ENCODE measurements at regions of chr22 and their contacts with region 1.

Region 1: GRCh38 chr22:18024276-18024947 is at the start of gene MICAL3:
- DNase-seq: peak in 1 of 2 donors; percentile 66
- ATAC-seq: peak; percentile 74 to 92 (median 88)
- H3K4me3 ChIP-seq: peak within 1 kb of the TSS; percentile 49 to 85 (median 80)
- H3K27ac ChIP-seq: peak within 1 kb of the TSS; percentile 35 to 95 (median 78)
- H3K4me1 ChIP-seq: peaks cover 0 to 36% (median 17%) of the 10 kb centered on the region in 9 donors
- H3K27me3 ChIP-seq: peaks cover 0 to 59% (median 0%) of the 10 kb centered on the region in 7 donors
- CTCF ChIP-seq: peak; percentile 39 to 83 (median 72)
- total RNA-seq, gene MICAL3: 74.7 to 137 (median 112) TPM

Region 2: DNA sequence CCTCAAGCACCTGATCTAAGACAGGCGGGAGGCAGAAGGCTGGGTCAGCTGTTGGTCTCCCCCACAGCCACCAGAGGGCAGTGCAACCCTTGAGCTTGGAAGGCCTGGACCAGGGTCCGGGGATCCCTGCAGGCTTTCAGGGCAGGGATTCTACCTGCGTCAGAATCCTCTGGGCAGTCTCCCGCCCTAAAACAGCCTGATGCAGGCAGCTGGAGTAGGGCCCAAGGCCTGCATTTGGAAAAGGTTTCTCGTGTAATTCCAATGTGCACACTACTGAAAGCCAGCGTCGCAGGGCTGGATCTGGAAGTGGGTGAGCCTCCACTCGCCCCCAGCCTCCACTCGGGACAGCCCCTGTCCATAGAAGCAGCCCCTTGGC is 281.9 kb before region 1 on chr22:
- intact Hi-C with region 1: no loop called
- DNase-seq: peak; percentile 58 to 61
- ATAC-seq: peak in 7 of 8 donors; percentile 50 to 77 (median 70)
- H3K4me3 ChIP-seq: no peak overlapping the region
- H3K27ac ChIP-seq: no peak overlapping the region
- H3K4me1 ChIP-seq: peaks cover 0 to 22% (median 14%) of the 10 kb centered on the region in 9 donors
- H3K27me3 ChIP-seq: no peaks in the 10 kb centered on the region
- CTCF ChIP-seq: peak; percentile 62 to 83 (median 75)

Region 3: DNA sequence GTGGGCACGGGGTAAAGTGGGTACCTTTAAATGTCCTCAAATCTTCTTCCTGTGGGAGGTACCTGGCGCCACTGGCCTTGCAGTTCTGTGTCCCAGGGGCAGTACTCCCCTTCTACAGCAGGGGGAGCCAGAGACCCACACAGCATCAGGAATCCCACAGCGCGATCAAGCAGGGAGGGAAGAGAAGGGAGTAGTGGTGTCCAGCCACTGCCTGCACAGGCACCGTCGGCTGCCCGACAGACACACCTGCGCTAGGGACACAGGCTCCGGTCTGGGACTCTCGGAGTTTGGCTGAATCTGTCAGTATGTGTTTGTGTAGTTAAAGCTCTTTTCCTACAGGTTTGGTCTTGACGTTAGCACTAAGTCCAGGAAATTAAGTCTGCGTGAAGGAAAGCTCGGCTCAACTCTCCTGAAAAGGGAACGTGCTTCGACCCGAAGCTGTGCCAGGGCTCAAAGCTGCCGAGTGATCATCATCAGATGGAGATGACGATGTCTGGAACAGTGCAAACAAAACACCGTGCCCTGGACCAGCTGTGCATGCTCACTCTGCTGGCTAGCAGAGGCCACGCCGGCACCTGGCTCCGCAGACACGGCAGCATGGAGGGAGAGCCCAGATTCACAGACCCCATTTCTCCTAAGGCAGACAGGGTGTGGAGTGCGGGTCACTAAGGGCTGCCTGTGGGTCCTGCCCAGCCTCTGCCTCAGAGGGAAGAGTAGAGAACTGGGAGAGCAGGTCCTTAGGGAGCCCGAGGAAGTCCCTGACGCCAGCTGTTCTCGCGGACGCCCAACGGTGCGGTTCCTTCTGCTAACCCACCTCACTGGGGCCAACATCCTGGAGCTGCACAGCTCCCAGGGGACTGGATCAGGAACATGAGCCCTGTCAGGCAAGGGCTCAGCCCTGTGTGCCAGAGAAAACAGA is 194.1 kb before region 1 on chr22:
- intact Hi-C with region 1: loop called in 7 of 10 experiments (anchors 2 to 10 kb)
- DNase-seq: peak; percentile 83 to 85
- ATAC-seq: peak; percentile 62 to 88 (median 80)
- H3K4me3 ChIP-seq: peak overlapping the region in 1 of 10 donors; percentile 4
- H3K27ac ChIP-seq: peak overlapping the region in 8 of 10 donors; percentile 54 to 81 (median 72)
- H3K4me1 ChIP-seq: peaks cover 18 to 53% (median 41%) of the 10 kb centered on the region in 9 donors
- H3K27me3 ChIP-seq: no peaks in the 10 kb centered on the region
- CTCF ChIP-seq: peak; percentile 97 to 100 (median 100)

Region 4: GRCh38 chr22:17903564-17904295 is 120.7 kb before region 1 on chr22:
- intact Hi-C with region 1: loop called in 3 of 10 experiments (anchors 2 to 10 kb)
- DNase-seq: peak in 1 of 2 donors; percentile 28
- ATAC-seq: peak in 7 of 8 donors; percentile 25 to 77 (median 55)
- H3K4me3 ChIP-seq: no peak overlapping the region
- H3K27ac ChIP-seq: peak overlapping the region in 9 of 10 donors; percentile 22 to 72 (median 50)
- H3K4me1 ChIP-seq: peaks cover 11 to 69% (median 37%) of the 10 kb centered on the region in 9 donors
- H3K27me3 ChIP-seq: no peaks in the 10 kb centered on the region
- CTCF ChIP-seq: peak in 1 of 9 donors; percentile 26

Region 5: GRCh38 chr22:17910561-17911311 is 113.7 kb before region 1 on chr22:
- intact Hi-C with region 1: loop called in 7 of 10 experiments (anchors 2 to 10 kb)
- DNase-seq: peak; percentile 69 to 83
- ATAC-seq: peak; percentile 87 to 96 (median 94)
- H3K4me3 ChIP-seq: peak overlapping the region in 2 of 10 donors; percentile 2 to 8
- H3K27ac ChIP-seq: peak overlapping the region; percentile 79 to 96 (median 85)
- H3K4me1 ChIP-seq: peaks cover 17 to 99% (median 69%) of the 10 kb centered on the region in 9 donors
- H3K27me3 ChIP-seq: no peaks in the 10 kb centered on the region
- CTCF ChIP-seq: peak in 8 of 9 donors; percentile 24 to 82 (median 53)

Region 6: DNA sequence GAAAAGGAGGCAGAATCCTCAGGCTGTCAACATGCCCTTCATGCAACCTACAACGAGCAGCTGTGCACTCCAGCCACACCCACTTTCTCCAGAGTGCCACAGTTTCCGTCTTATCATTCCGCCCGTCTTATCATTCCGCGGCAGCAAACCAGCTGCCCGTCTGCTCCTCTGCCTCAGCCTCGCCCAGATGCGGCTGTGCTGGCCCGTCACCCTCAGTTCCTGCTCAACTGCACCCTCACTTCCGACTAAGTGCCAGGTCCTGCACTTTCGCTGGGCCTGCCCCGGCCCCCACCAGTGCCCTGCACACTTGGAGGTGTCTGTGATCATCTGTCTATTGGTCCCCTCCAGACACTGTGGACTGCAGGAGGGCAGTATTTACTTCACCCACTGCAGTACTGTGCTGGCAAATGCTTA is 43.8 kb before region 1 on chr22:
- intact Hi-C with region 1: loop called in 1 of 10 experiments (anchors 5 kb)
- DNase-seq: peak in 1 of 2 donors; percentile 33
- ATAC-seq: peak in 7 of 8 donors; percentile 21 to 74 (median 56)
- H3K4me3 ChIP-seq: peak overlapping the region in 5 of 10 donors; percentile 7 to 25 (median 12)
- H3K27ac ChIP-seq: peak overlapping the region in 7 of 10 donors; percentile 7 to 65 (median 36)
- H3K4me1 ChIP-seq: peaks cover 11 to 58% (median 25%) of the 10 kb centered on the region in 9 donors
- H3K27me3 ChIP-seq: no peaks in the 10 kb centered on the region
- CTCF ChIP-seq: no peak

Region 7: GRCh38 chr22:18001040-18001893 is 23.1 kb before region 1 on chr22:
- intact Hi-C with region 1: loop called in 1 of 10 experiments (anchors 2 kb)
- DNase-seq: peak; percentile 90 to 94
- ATAC-seq: peak; percentile 96 to 98 (median 97)
- H3K4me3 ChIP-seq: peak overlapping the region; percentile 57 to 92 (median 76)
- H3K27ac ChIP-seq: peak overlapping the region; percentile 85 to 98 (median 91)
- H3K4me1 ChIP-seq: peaks cover 0 to 53% (median 25%) of the 10 kb centered on the region in 9 donors
- H3K27me3 ChIP-seq: peaks cover 0 to 12% (median 0%) of the 10 kb centered on the region in 7 donors
- CTCF ChIP-seq: peak in 8 of 9 donors; percentile 21 to 67 (median 52)

Region 8: DNA sequence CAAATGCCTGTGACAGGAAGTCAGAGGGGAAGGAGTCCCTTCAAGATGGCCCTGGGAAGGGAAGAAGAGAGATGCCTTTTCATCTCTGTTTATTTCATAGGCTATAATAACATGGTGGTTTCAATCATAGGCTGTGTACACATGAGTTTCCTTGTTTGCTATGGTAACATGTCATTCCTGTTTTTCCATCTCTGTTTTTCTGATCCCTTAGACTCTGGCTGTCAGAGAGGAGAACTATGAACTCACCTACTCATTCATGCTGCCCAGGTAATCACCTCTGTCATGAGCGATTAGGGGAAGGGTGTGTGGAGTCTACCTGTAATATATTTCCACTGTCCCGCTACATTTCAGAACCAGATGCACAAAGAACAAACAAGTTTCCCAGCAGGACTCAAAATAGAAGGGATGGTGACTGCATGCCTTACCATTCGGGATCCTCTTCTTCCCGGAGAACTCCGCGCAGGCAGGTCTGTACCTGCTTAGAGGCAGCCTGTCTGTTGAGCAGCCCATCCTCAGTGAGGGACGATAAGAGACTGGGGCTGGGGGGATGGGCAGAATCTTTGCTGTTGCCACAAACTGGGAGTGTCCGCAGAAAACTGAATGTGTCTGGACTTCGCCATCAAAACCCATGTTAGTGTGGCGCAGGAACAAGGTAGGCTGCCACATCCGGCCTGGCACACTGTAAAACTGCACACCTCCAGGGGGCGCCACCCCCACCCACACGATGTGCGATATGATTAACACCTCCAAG is 46.3 kb after region 1 on chr22:
- intact Hi-C with region 1: loop called in 4 of 10 experiments (anchors 5 to 10 kb)
- DNase-seq: no peak
- ATAC-seq: no peak
- H3K4me3 ChIP-seq: no peak overlapping the region
- H3K27ac ChIP-seq: no peak overlapping the region
- H3K4me1 ChIP-seq: peaks cover 0 to 38% (median 7%) of the 10 kb centered on the region in 9 donors
- H3K27me3 ChIP-seq: peaks cover 0 to 7% (median 0%) of the 10 kb centered on the region in 7 donors
- CTCF ChIP-seq: peak in 4 of 9 donors; percentile 9 to 23 (median 13)

Region 9: DNA sequence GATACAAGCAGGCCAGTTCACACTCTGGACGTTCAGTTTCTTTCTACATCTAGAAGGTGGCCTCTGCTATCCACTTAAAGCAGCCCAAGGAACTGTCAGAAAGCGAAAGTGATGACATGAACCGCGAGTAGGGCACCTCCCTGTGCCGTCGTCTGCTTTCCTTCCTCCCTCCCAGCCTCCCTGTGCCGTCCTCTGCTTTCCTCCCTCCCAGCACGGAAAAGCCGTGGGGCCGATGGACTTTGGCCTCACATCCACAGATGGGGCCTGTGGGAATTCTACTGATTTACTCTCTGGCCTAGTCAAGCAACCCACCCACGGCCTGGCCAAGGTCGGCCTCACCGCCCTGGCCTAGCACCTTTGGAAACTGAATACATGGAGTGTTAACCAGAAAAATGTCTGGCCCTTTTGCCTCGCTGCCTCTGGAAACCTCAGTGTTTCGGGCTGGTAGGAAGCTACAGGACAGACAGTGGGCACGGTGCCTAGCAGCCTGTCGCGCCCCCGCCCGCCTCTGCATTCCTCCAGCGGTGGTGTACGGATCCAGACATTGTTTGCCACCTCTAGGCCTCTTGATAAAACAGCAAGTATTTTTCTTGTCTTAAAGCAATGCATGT is 67.6 kb after region 1 on chr22:
- intact Hi-C with region 1: no loop called
- DNase-seq: peak; percentile 73 to 75
- ATAC-seq: peak; percentile 81 to 89 (median 86)
- H3K4me3 ChIP-seq: peak overlapping the region in 9 of 10 donors; percentile 10 to 50 (median 45)
- H3K27ac ChIP-seq: peak overlapping the region; percentile 80 to 94 (median 90)
- H3K4me1 ChIP-seq: peaks cover 0 to 47% (median 28%) of the 10 kb centered on the region in 9 donors
- H3K27me3 ChIP-seq: no peaks in the 10 kb centered on the region
- CTCF ChIP-seq: peak in 3 of 9 donors; percentile 29 to 43 (median 40)

Measured in heart right ventricle (tissue), 16 donors.